A549 (cell line): ENCODE measurements at regions of chr9 and their contacts with region 1.

Region 1: GRCh38 chr9:130306823-130307666 is 41.5 kb downstream of the HMCN2 start:
- DNase-seq: no peak
- ATAC-seq: no peak
- H3K4me3 ChIP-seq: no peak overlapping the region
- H3K27ac ChIP-seq: no peak overlapping the region
- H3K4me1 ChIP-seq: no peaks in the 10 kb centered on the region
- CTCF ChIP-seq: no peak
- EP300 ChIP-seq: no peak
- POLR2A ChIP-seq: no peak
- RAD21 ChIP-seq: no peak

Region 2: DNA sequence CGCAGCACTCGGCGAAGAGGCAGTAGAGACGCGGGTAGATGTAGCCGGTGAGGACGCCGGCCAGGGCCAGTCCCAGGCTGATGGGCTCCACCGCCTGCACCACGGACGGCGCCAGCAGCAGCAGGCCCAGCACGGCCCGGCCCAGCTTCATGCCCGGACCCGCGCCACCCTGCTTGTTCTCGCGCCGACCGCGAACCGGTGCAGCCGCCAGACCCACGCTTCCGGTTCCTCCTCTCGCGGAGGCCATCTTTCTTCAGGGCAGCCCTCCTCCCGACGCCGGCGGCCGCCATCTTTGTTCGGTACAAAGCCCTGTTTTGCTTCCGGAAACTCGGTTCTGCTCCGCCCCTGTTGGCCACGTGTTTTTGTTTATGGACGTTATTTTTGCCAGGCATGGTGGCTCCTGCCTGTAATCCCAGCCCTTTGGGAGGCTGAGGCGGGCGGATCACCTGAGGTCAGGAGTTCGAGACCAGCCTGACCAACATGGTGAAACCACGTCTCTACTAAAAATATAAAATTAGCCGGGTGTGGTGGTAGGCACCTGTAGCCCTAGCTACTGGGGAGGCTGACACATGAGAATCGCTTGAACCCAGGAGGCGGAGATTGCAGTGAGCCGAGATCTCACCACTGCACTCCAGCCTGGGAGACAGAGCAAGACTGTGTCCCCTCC is 483.0 kb before region 1 on chr9 and contains the start of gene TOR1A:
- CTCF ChIA-PET with region 1: no interaction called
- POLR2A ChIA-PET with region 1: interaction called, 10 read pairs
- DNase-seq: peak; percentile 88 to 97
- ATAC-seq: peak; percentile 94 to 96
- H3K4me3 ChIP-seq: peak within 1 kb of the TSS; percentile 88
- H3K27ac ChIP-seq: peak within 1 kb of the TSS; percentile 96 to 98
- H3K4me1 ChIP-seq: peaks cover 6% of the 10 kb centered on the region; the same call in 2 of the 3 replicates
- CTCF ChIP-seq: no peak
- EP300 ChIP-seq: no peak
- POLR2A ChIP-seq: peak; percentile 95
- RAD21 ChIP-seq: no peak
- polyA plus RNA-seq, gene TOR1A: 74.9 and 77.3 TPM in 2 replicates

Region 3: GRCh38 chr9:130461218-130461630 is 154.2 kb after region 1 on chr9:
- CTCF ChIA-PET with region 1: no interaction called
- POLR2A ChIA-PET with region 1: no interaction called
- DNase-seq: peak; percentile 39 to 59
- ATAC-seq: peak; percentile 63 to 82
- H3K4me3 ChIP-seq: no peak overlapping the region
- H3K27ac ChIP-seq: no peak overlapping the region
- H3K4me1 ChIP-seq: no peaks in the 10 kb centered on the region
- CTCF ChIP-seq: peak; percentile 86
- EP300 ChIP-seq: no peak
- POLR2A ChIP-seq: no peak
- RAD21 ChIP-seq: peak; percentile 89 to 96